Activated CD4-positive, alpha-beta T cell treated with anti-CD3 and anti-CD28 coated beads for 36 hours (primary cell): ENCODE measurements at regions of chr2 and their contacts with region 1.

Region 1: DNA sequence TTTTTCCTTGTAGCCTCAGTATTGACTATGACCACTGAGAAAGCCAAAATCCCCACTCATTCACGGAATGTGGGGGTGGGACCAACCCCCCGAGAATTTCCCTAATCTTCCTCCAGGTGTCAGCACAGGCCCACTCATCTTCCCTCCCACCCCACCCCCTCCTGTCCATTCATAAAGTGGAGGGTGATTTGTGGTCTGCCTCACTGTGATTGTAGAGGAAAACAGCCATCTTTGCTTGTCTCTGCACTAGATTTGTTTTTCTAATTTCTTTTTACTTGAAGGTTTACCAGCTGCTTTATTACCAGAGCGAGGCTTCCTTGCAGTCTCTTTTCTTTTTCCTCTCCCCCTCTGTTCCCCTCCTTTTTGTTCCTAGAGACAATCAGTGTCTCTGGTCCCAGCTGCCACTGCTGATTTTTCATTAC is 171.8 kb downstream of the ICOS start:
- DNase-seq: peak; percentile 74
- ATAC-seq: peak; percentile 30
- H3K4me3 Mint-ChIP-seq: peak overlapping the region; percentile 58
- H3K27ac Mint-ChIP-seq: peak overlapping the region; percentile 92
- H3K4me1 Mint-ChIP-seq: peaks cover 75% of the 10 kb centered on the region
- H3K27me3 Mint-ChIP-seq: peaks cover 2% of the 10 kb centered on the region

Region 2: DNA sequence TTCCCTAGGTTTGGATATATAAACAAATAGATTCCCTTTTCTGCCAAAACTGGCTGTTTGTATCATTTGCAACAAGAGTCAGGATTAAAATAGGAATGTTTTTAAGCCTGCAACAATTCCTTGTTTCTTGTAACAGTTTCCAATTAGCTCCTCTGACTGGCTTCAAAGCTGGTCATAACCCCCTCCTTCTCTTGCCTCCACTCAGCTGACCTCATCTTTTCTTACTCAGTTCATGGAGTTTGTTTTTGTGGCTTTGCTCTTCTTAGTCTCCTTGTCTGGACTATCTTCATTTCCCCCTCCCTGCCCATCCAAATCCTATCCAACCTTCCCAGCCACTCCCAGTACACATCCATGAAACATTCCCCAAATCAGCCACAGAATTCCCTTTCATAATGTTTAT is 558.9 kb before region 1 on chr2:
- CTCF ChIA-PET with region 1: no interaction called
- POLR2A ChIA-PET with region 1: no interaction called
- intact Hi-C with region 1: no loop called
- DNase-seq: no peak
- ATAC-seq: no peak
- H3K4me3 Mint-ChIP-seq: no peak overlapping the region
- H3K27ac Mint-ChIP-seq: no peak overlapping the region
- H3K4me1 Mint-ChIP-seq: peaks cover 4% of the 10 kb centered on the region
- H3K27me3 Mint-ChIP-seq: peaks cover under 1% of the 10 kb centered on the region

Region 3: GRCh38 chr2:203880557-203881125 is 227.7 kb before region 1 on chr2:
- CTCF ChIA-PET with region 1: no interaction called
- POLR2A ChIA-PET with region 1: no interaction called
- intact Hi-C with region 1: no loop called
- DNase-seq: peak; percentile 18
- ATAC-seq: peak; percentile 27
- H3K4me3 Mint-ChIP-seq: no peak overlapping the region
- H3K27ac Mint-ChIP-seq: no peak overlapping the region
- H3K4me1 Mint-ChIP-seq: peaks cover 21% of the 10 kb centered on the region
- H3K27me3 Mint-ChIP-seq: no peaks in the 10 kb centered on the region

Region 4: DNA sequence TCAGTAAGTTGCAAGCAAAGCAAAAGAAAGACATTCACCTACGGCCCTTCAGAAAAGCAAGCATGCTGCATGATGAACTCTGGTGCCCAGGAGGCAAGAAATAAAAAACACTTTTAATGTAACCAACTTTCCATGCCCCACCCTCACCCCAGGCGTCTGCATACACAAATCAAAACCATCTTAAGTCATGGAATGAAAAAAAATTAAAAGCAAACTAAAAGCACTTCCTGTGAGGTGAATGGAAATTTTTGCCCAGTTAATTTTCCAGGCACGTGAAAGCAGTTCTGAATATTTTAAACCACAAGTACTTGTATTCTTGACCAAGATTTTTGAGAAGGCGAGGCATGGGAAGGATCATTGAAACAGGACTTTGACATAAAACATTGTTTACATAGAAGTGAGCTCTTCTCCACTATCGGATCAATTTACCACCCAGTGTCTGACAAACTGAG is 174.3 kb before region 1 on chr2:
- CTCF ChIA-PET with region 1: interaction called, 3 read pairs
- POLR2A ChIA-PET with region 1: no interaction called
- intact Hi-C with region 1: loop called (anchors 2 kb)
- DNase-seq: peak; percentile 78
- ATAC-seq: peak; percentile 47
- H3K4me3 Mint-ChIP-seq: peak overlapping the region; percentile 69
- H3K27ac Mint-ChIP-seq: peak overlapping the region; percentile 96
- H3K4me1 Mint-ChIP-seq: peaks cover 61% of the 10 kb centered on the region
- H3K27me3 Mint-ChIP-seq: no peaks in the 10 kb centered on the region

Region 5: DNA sequence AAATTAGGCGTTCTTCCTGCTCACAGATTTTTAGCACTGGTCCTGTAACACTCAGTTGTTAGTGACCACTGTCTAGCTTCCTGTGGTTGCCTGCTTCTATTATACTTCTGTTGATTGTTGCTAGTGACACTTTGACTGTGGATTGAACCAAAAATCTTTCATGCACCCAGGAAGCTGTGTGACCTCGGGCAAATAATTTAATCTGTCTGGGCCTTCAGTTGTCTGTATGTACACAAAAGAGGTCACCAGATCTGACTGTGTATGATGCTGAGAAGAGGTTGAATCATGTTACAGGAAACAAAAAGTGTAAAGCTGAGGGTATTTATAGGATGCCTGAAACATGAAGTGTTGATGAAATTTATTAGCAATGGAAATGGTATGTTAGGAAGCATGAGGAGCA is 159.1 kb before region 1 on chr2:
- CTCF ChIA-PET with region 1: interaction called, 3 read pairs
- POLR2A ChIA-PET with region 1: interaction called, 10 read pairs
- intact Hi-C with region 1: no loop called
- DNase-seq: no peak
- ATAC-seq: peak; percentile 59
- H3K4me3 Mint-ChIP-seq: peak overlapping the region; percentile 73
- H3K27ac Mint-ChIP-seq: peak overlapping the region; percentile 91
- H3K4me1 Mint-ChIP-seq: peaks cover 91% of the 10 kb centered on the region
- H3K27me3 Mint-ChIP-seq: no peaks in the 10 kb centered on the region

Region 6: DNA sequence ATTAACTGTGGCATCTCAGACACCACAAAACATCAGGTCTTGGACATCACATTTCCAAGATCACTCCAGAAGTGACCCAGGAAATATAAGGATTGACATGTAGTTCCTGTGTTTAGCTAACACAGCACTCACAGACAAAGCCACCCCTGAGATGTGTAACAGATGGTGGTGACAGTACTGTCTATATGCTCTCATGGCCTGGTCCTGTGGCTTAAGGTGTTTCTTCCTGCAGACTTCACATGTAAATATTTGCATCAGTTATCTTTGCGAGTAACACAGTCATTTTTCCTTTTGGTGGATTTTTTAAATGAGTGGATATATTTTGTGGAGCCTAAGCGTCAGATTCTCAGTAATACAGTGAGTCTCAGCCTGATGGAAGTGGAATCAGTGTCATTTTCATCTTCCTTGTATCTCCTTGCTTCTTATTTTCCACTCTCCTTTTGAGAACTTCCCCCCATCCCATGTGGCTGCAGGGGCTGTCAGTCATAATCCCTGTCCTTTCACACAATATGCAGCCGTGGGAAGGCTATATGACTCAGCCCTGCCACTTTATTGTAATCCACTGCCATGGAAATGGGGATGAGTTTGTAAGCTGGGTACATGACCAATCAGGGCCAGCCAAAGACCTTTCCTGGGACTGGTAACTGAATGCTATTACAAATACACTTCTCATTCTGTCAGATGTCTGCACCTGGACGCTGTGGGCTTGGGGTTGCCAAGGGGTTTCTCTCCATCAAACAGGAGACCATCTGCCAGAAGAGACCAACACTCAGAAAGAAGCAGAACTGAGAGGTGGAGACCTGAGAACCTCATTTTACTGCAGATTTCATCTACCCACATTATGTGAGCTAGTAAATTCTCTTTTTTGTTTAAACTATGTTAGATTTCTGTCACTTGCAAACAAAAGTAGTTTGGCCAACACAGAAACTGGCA is 97.4 kb before region 1 on chr2:
- CTCF ChIA-PET with region 1: no interaction called
- POLR2A ChIA-PET with region 1: no interaction called
- intact Hi-C with region 1: no loop called
- DNase-seq: peak; percentile 31
- ATAC-seq: peak; percentile 42
- H3K4me3 Mint-ChIP-seq: peak overlapping the region; percentile 34
- H3K27ac Mint-ChIP-seq: peak overlapping the region; percentile 72
- H3K4me1 Mint-ChIP-seq: peaks cover 84% of the 10 kb centered on the region
- H3K27me3 Mint-ChIP-seq: no peaks in the 10 kb centered on the region

Region 7: DNA sequence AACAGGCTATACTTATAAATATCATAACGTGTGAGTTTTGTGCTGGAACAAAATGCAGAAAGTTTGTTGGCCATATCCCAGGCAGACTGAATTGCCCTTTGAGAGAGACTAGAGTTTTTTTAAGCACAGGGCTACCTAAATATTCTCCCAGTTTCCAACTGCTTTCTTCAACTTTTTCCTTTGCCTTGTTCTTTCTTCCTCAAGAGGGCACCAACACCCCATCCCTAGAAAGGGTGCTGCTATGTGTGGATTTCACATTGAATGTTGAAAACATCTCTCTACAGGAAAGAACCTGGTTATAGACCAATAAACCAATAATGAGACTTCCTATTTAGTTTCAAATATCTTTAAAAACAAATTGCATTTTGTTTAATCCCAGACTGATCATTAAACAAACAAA is 83.8 kb before region 1 on chr2:
- CTCF ChIA-PET with region 1: interaction called, 6 read pairs
- POLR2A ChIA-PET with region 1: no interaction called
- intact Hi-C with region 1: loop called (anchors 1 to 2 kb)
- DNase-seq: peak; percentile 50
- ATAC-seq: no peak
- H3K4me3 Mint-ChIP-seq: no peak overlapping the region
- H3K27ac Mint-ChIP-seq: no peak overlapping the region
- H3K4me1 Mint-ChIP-seq: peaks cover 52% of the 10 kb centered on the region
- H3K27me3 Mint-ChIP-seq: no peaks in the 10 kb centered on the region

Region 8: GRCh38 chr2:204145263-204145751 is 37.0 kb after region 1 on chr2:
- CTCF ChIA-PET with region 1: interaction called, 9 read pairs
- POLR2A ChIA-PET with region 1: no interaction called
- intact Hi-C with region 1: loop called (anchors 1 to 2 kb)
- DNase-seq: peak; percentile 89
- ATAC-seq: peak; percentile 97
- H3K4me3 Mint-ChIP-seq: peak overlapping the region; percentile 65
- H3K27ac Mint-ChIP-seq: peak overlapping the region; percentile 68
- H3K4me1 Mint-ChIP-seq: peaks cover 10% of the 10 kb centered on the region
- H3K27me3 Mint-ChIP-seq: peaks cover 13% of the 10 kb centered on the region

Region 9: GRCh38 chr2:205474741-205475415 is 1366.5 kb after region 1 on chr2:
- CTCF ChIA-PET with region 1: no interaction called
- POLR2A ChIA-PET with region 1: no interaction called
- intact Hi-C with region 1: loop called in 1 of 2 experiments (anchors 5 kb)
- DNase-seq: peak; percentile 15
- ATAC-seq: peak; percentile 47
- H3K4me3 Mint-ChIP-seq: no peak overlapping the region
- H3K27ac Mint-ChIP-seq: no peak overlapping the region
- H3K4me1 Mint-ChIP-seq: peaks cover 4% of the 10 kb centered on the region
- H3K27me3 Mint-ChIP-seq: peaks cover 14% of the 10 kb centered on the region

Region 10: GRCh38 chr2:205680067-205680466 is 1571.7 kb after region 1 on chr2:
- CTCF ChIA-PET with region 1: no interaction called
- POLR2A ChIA-PET with region 1: no interaction called
- intact Hi-C with region 1: loop called in 1 of 2 experiments (anchors 5 kb)
- DNase-seq: peak; percentile 67
- ATAC-seq: peak; percentile 63
- H3K4me3 Mint-ChIP-seq: no peak overlapping the region
- H3K27ac Mint-ChIP-seq: no peak overlapping the region
- H3K4me1 Mint-ChIP-seq: peaks cover 15% of the 10 kb centered on the region
- H3K27me3 Mint-ChIP-seq: peaks cover 39% of the 10 kb centered on the region